ENCODE measurements at regions of chr14 and their contacts with region 1.

Region 1: DNA sequence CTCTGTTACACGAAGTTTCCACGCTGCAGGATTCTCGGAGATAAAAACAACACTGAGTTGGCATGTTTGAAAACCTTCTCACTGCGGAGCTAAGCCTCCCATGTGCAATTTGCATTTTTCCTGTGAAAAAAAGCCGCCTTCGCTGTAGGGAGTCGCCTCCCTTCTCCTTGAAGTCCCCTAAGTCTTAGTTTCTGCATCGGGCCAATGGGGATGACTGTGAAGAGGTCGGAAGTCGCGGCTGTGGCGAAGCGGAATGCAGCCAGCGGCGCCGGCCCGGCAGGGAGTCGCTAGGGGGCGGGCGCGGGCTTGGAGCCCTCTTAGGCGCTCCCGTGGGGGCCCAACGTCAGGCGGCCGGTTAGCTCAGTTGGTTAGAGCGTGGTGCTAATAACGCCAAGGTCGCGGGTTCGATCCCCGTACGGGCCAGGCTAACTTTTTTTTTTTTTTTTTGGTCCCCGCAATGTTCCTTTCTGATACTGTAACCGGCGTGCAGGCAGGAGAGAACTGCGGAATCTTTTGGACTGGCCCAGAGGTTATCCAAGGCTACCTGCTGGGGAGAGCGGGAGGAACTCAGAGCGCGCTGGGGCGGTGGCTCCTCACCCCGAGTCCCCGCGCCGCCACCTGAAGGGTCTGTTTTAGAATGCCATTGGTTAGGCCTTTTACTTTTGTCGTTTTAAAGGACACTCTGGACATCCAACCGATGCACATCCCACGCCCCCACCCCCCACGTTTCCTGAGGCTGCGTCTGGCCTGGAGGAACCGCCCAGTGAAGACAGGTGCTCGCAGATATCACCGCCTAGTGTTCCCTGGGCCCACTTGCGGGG is 2.6 kb upstream of the ZNF839 start:
- DNase-seq: peak; percentile 93
- H3K4me3 ChIP-seq: peak overlapping the region; percentile 66
- H3K27ac ChIP-seq: peak overlapping the region; percentile 70
- H3K4me1 ChIP-seq: peaks cover 53% of the 10 kb centered on the region
- CTCF ChIP-seq: peak; percentile 79

Region 2: GRCh38 chr14:101761032-101761880 is 555.7 kb before region 1 on chr14 and contains the start of gene PPP2R5C:
- CTCF ChIA-PET with region 1: no interaction called
- POLR2A ChIA-PET with region 1: no interaction called
- intact Hi-C with region 1: loop called (anchors 2 kb)
- DNase-seq: peak; percentile 90
- H3K4me3 ChIP-seq: peak within 1 kb of the TSS; percentile 100
- H3K27ac ChIP-seq: peak within 1 kb of the TSS; percentile 69
- H3K4me1 ChIP-seq: peaks cover 15% of the 10 kb centered on the region
- CTCF ChIP-seq: no peak
- total RNA-seq, gene PPP2R5C: 134 and 161 TPM in 2 replicates

Region 3: DNA sequence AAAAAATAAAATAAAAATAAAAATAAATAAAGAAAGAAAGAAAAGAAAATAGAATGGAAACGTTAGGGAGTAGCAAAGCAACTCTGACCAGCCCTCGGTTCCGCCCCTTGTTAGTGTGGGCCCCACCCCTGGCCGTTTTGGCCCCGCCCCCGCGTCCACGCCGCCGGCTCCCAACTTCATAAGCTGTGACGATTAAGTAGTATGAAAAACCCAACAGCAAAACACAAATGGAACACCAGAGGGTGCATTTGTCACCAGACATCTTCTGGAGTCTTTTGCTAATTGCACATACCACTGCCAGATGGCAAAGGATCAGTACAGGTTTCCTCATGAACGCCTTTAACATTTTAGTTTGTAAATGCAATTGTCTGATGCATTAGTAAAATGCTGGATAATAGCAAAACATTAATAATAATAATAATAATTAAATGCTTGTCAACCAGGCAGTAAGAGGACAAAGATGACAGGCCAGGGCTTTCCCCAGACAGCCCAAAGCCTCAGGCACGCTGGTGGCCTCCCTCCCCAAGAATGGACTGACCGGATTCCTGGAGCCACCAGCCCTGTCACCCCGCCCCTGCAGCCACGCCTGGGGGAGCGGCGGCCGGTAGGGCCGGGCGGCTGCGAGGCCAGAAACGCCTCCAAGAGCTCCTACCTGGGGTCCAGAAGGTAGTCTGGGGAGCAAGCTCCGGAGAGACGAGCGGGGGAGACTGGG is 253.7 kb before region 1 on chr14:
- CTCF ChIA-PET with region 1: interaction called, 4 read pairs
- POLR2A ChIA-PET with region 1: interaction called, 3 read pairs
- intact Hi-C with region 1: loop called (anchors 1 kb)
- DNase-seq: peak; percentile 83
- H3K4me3 ChIP-seq: no peak overlapping the region
- H3K27ac ChIP-seq: no peak overlapping the region
- H3K4me1 ChIP-seq: no peaks in the 10 kb centered on the region
- CTCF ChIP-seq: peak; percentile 76

Region 4: GRCh38 chr14:102139248-102140026 is 177.5 kb before region 1 on chr14 and contains the start of gene WDR20:
- CTCF ChIA-PET with region 1: no interaction called
- POLR2A ChIA-PET with region 1: interaction called, 4 read pairs
- intact Hi-C with region 1: loop called (anchors 1 kb)
- DNase-seq: peak; percentile 99
- H3K4me3 ChIP-seq: peak within 1 kb of the TSS; percentile 93
- H3K27ac ChIP-seq: peak within 1 kb of the TSS; percentile 56
- H3K4me1 ChIP-seq: peaks cover 19% of the 10 kb centered on the region
- CTCF ChIP-seq: peak; percentile 57
- total RNA-seq, gene WDR20: 13.3 and 18.0 TPM in 2 replicates

Region 5: DNA sequence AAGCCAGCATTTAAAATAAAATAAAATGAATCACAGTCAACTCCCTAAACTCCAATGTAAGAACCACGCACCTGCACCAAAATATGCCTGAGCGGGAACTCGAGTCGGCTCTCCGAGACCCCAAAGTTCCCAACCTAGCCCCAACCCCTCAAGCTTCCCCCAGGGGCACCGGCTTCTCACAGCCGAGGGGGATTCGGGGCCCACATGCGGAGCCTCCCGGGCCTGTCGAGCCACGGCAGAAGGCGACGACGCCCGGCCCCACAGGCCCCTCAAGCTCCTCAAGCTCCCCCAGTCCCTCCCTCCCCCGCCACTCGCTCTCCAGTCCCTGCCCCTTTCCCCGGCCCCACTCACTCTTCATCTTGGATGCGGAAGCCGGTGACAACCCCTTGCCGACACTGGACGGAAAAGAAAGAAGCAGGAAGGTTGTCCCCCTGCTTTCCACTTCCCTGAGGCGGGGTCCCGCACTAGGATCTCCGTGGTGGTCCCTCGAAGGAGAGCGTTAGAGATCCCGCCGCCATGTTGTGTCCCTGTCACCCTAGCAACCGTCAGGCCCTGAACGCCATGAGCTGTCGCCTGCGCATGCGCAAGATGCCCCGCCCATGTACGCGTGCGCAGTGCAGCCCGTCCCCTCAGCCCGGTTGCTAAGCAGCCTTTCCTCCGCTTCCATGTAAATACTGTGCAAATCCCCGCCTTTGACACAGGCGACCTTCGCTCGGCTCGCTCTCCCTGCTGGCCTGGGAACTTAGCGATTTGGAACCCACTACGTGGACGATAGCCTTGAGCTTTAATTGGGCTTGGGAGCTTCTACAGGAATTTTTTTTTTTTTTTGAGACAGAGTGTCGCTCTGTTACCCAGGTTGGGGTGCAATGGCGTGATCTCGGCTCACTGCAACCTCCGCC is 12.1 kb before region 1 on chr14 and contains the start of gene MOK:
- CTCF ChIA-PET with region 1: interaction called, 3 read pairs
- POLR2A ChIA-PET with region 1: interaction called, 7 read pairs
- intact Hi-C with region 1: loop called (anchors 1 kb)
- DNase-seq: peak; percentile 94
- H3K4me3 ChIP-seq: peak within 1 kb of the TSS; percentile 76
- H3K27ac ChIP-seq: no peak within 1 kb of the TSS
- H3K4me1 ChIP-seq: peaks cover 6% of the 10 kb centered on the region
- CTCF ChIP-seq: no peak
- total RNA-seq, gene MOK: 3.7 and 4.0 TPM in 2 replicates

Region 6: DNA sequence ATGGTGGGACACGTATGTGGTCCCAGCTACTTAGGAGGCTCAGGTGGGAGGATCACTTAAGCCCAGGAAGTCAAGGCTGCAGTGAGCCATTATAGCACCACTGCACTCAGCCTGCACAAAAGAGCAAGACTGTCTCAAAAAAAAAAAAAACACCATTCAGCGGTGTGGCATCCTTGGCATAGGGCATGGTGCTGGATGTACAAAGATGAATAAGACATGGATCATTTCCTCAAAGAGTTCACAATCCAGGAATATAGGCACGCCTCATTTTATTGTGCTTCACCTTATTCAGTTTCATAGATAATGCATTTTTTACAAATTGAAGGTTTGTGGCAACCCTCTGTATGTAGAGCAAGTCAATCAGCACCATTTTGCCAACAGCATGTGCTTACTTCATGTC is 39.3 kb after region 1 on chr14:
- CTCF ChIA-PET with region 1: no interaction called
- POLR2A ChIA-PET with region 1: no interaction called
- intact Hi-C with region 1: no loop called
- DNase-seq: no peak
- H3K4me3 ChIP-seq: no peak overlapping the region
- H3K27ac ChIP-seq: no peak overlapping the region
- H3K4me1 ChIP-seq: no peaks in the 10 kb centered on the region
- CTCF ChIP-seq: no peak

Region 7: GRCh38 chr14:102500158-102500662 is 183.3 kb after region 1 on chr14:
- CTCF ChIA-PET with region 1: no interaction called
- POLR2A ChIA-PET with region 1: no interaction called
- intact Hi-C with region 1: no loop called
- DNase-seq: no peak
- H3K4me3 ChIP-seq: no peak overlapping the region
- H3K27ac ChIP-seq: no peak overlapping the region
- H3K4me1 ChIP-seq: no peaks in the 10 kb centered on the region
- CTCF ChIP-seq: no peak

Region 8: DNA sequence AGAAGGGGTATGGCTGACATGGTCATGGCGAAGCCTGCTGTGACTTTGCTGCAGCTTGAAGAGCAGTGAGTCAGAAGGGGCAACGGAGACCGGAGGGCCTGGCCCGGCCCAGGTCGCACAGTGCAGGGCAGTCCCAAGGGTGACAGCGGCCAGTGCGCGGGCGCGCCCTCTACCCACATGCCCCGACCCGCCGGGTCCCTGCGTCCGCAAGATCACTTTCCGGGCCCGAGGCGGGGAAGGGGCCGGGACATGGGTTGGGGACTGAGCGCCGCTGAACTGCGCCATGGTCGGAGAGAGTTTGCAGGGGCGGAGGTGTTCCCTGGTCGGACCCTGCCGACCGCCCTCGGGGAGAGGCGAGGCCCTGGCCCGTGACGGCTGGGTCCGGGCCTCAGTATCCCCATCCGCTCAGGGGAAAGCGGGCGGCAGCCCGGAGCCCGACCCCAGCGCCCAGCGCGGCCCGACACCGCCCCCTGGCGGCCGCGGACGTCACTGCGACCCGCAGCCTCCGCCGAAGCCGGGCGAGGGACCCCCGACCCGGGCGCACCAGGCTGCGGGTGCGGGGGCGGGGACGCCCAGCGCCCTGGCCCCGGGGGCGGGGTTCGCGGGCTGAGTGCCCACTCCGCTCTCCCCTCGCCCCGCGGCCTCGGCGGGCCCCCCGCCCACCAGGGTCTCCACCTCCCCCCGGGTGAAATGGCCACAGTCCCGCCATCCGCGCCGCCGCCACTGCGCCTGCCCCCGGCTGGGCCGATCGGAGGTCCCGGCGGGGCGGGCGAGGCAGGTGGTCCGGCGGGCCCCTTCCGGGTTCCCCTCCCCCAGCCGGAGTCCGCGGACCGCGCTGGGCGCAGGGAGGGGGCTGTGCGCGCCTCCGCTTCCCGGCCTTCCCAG is 199.8 kb after region 1 on chr14:
- CTCF ChIA-PET with region 1: no interaction called
- POLR2A ChIA-PET with region 1: no interaction called
- intact Hi-C with region 1: loop called (anchors 2 kb)
- DNase-seq: peak; percentile 46
- H3K4me3 ChIP-seq: peak overlapping the region; percentile 55
- H3K27ac ChIP-seq: no peak overlapping the region
- H3K4me1 ChIP-seq: no peaks in the 10 kb centered on the region
- CTCF ChIP-seq: peak; percentile 79